Ascending aorta (tissue), 2 donors: ENCODE measurements at regions of chr15 and their contacts with region 1.

Region 1: GRCh38 chr15:72231066-72231846 is at the start of gene PKM:
- DNase-seq: peak; percentile 88 to 98
- H3K4me3 ChIP-seq: peak within 1 kb of the TSS; percentile 87 to 98
- H3K27ac ChIP-seq: peak within 1 kb of the TSS; percentile 99 to 100
- H3K4me1 ChIP-seq: peaks cover 5 to 39% of the 10 kb centered on the region in 2 donors
- H3K27me3 ChIP-seq: no peaks in the 10 kb centered on the region
- CTCF ChIP-seq: no peak
- total RNA-seq, gene PKM: 313 TPM

Region 2: GRCh38 chr15:70376929-70377691 is 1854.1 kb before region 1 on chr15:
- intact Hi-C with region 1: loop called (anchors 10 kb)
- DNase-seq: peak in 1 of 2 donors; percentile 66
- H3K4me3 ChIP-seq: peak overlapping the region; percentile 25 to 52
- H3K27ac ChIP-seq: peak overlapping the region; percentile 49 to 50
- H3K4me1 ChIP-seq: peaks cover 0 to 21% of the 10 kb centered on the region in 2 donors
- H3K27me3 ChIP-seq: no peaks in the 10 kb centered on the region
- CTCF ChIP-seq: no peak

Region 3: DNA sequence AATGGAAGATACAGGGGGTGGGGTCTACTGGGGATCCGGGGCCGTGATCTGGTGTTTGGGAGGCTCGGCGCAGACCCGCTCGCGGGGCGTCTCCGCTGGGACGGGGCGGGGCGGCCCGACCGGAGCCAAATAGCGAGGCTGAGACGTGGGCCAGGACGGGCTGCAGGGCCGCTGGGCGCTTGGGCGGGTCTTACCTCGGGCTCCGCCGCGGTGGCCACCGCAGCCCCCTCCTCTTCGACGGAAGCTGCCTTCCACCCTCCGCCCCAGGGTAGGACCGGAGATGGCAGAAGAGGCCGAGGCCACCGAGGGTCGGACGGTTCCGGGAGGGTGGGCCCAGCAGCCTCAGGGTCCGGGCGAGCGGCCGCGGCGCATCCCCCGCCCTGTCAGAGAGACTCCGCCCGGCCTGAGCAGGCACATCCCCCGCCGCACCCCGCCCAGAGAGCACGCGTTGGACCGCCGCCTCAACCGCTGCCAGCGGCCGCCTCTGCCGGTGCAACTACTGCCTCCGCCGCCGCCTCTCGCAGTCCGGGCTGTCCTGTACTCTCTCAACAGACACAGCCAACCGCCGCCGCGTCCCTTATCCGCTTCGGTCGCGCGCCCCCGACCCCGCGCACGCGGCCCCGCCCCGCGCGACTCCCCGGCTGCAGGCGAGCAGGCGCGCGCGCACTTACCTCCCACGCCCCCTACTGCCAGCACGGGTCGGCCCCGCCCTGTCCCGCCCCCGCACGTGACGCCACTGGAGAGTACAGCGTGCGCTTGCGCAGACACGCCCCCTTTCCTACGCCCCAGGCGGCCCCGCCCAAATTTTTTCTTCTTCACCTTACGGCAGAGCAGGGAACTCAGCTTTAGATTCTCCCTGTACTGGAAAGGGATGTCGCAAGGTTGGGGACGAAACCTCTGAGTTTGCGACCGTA is 113.5 kb before region 1 on chr15 and contains the start of gene MYO9A:
- intact Hi-C with region 1: loop called (anchors 2 kb)
- DNase-seq: peak; percentile 84 to 99
- H3K4me3 ChIP-seq: peak within 1 kb of the TSS; percentile 74 to 87
- H3K27ac ChIP-seq: peak within 1 kb of the TSS; percentile 90 to 97
- H3K4me1 ChIP-seq: peaks cover 0 to 10% of the 10 kb centered on the region in 2 donors
- H3K27me3 ChIP-seq: no peaks in the 10 kb centered on the region
- CTCF ChIP-seq: no peak
- total RNA-seq, gene MYO9A: 128 TPM

Region 4: DNA sequence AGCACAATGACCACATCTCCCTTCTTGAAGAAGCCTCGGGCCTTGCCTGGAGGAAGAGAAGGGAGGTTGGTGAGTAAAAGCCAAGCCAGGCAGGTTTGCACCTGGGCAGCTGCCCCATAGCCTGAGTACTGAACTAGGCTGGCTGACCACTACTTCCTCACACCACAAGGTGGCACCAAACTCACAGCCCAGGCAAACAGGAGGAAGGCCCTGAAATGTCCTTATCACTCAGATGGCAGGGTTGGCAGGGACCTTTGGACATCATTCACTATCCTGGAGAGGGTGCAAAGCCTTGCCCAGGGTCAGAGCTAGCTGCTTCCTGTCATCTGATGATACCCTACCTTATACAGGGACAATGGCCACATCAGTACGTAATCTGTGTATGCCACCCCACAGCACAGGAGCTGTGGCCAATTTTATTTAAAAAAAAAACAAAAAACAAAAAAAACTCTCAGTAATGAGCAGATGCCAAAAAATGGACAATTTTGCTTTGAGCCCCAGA is 31.5 kb before region 1 on chr15:
- intact Hi-C with region 1: loop called (anchors 2 kb)
- DNase-seq: peak; percentile 28 to 88
- H3K4me3 ChIP-seq: no peak overlapping the region
- H3K27ac ChIP-seq: peak overlapping the region in 1 of 2 donors; percentile 4
- H3K4me1 ChIP-seq: peaks cover 6 to 7% of the 10 kb centered on the region in 2 donors
- H3K27me3 ChIP-seq: no peaks in the 10 kb centered on the region
- CTCF ChIP-seq: peak; percentile 86 to 95 (median 90)

Region 5: GRCh38 chr15:72272213-72273002 is 41.2 kb after region 1 on chr15 and contains the start of gene PARP6:
- intact Hi-C with region 1: loop called (anchors 2 kb)
- DNase-seq: peak; percentile 96 to 99
- H3K4me3 ChIP-seq: peak within 1 kb of the TSS; percentile 80 to 96
- H3K27ac ChIP-seq: peak within 1 kb of the TSS; percentile 88 to 94
- H3K4me1 ChIP-seq: peaks cover 0 to 11% of the 10 kb centered on the region in 2 donors
- H3K27me3 ChIP-seq: no peaks in the 10 kb centered on the region
- CTCF ChIP-seq: peak; percentile 60 to 73 (median 71)
- total RNA-seq, gene PARP6: 26.5 TPM

Region 6: DNA sequence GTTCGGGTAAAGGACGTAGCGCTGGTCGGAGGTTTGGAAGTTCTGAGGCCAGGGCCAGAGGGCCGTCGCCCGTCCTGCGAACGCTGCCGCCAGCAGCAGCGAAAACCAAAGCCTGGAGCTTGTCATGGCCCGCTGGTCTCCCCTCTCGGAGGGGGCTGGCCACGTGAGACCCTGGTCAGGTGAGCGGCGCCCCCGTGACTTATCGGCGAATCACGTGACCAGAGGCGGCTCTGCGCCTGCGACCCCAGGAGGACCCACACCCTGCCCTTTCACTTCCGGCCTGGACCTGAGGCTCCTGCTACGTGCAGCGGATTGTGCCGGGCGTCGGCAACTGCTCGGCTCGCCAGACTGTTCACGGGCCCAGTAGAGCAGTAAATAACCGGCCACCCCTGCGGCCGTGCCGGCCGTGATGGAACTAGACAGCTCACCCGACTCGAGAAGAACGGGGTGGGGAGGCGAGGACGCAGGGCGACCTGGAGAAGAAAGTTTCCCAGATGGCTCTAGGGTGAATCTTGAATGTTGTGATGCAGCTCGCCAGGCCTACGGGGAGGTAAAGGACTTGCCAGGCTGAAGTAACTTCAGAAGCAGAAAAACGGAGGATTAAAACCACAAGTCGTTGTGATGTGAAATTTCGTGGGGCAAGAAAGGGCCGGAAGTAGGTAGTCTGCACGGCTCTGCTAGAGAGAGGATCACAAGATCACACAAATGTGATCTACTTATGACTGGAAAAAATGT is 144.8 kb after region 1 on chr15 and contains the start of gene HEXA:
- intact Hi-C with region 1: loop called (anchors 1 kb)
- DNase-seq: peak; percentile 87 to 98
- H3K4me3 ChIP-seq: peak within 1 kb of the TSS; percentile 86 to 87
- H3K27ac ChIP-seq: peak within 1 kb of the TSS; percentile 84 to 89
- H3K4me1 ChIP-seq: peaks cover 0 to 13% of the 10 kb centered on the region in 2 donors
- H3K27me3 ChIP-seq: no peaks in the 10 kb centered on the region
- CTCF ChIP-seq: no peak
- total RNA-seq, gene HEXA: 111 TPM

Region 7: GRCh38 chr15:72473614-72474465 is 242.6 kb after region 1 on chr15 and contains the start of gene ARIH1:
- intact Hi-C with region 1: loop called (anchors 2 kb)
- DNase-seq: peak; percentile 86 to 98
- H3K4me3 ChIP-seq: peak within 1 kb of the TSS; percentile 73 to 100
- H3K27ac ChIP-seq: peak within 1 kb of the TSS; percentile 97 to 100
- H3K4me1 ChIP-seq: peaks cover 0 to 41% of the 10 kb centered on the region in 2 donors
- H3K27me3 ChIP-seq: no peaks in the 10 kb centered on the region
- CTCF ChIP-seq: peak in 2 of 3 experiments; percentile 8 to 22
- total RNA-seq, gene ARIH1: 109 TPM